Prostate gland (tissue), 2 donors: ENCODE measurements at regions of chr12 and their contacts with region 1.

Region 1: DNA sequence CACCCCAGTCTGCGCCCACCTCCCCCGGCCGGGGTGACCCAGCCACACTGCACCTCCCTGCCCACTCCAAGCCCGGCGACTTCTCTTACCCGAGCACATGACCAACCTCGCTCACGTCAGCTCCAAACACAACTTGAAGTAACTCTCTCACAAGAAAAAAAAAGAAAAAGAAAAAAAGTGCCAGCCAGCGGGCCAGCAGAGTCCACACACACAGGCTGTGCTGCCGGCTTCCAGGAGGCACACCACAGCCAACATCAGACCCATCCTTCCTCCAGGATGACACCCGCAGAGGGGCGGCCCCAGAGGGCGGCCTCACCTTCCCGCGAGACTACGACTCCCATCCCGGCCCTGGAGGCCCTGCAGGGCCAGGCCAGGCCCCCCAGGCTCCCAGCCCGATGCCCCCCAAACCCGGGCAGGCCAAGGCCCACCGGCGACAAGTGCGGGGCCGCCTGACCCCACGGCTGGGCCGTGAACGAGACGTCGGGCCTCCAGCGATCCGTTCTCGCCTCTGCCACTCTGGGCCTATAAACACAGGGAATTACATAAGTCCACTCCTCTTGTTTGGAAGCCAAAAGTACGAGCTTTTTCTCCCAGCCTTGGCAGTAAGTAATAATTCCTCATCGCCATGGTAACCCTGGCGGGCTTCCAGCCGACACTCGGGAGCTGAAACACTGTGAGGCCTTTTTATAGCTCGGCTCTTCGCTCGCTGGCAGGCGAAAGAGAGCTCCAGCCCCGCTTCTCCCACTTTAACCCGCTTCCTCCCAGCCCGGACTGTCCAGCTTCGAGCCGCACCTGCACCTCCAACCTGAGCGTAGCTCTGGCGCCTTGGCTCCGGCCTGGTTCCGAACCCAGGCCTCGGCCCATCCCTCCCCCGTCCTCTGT is 49.1 kb downstream of the NCOR2 start:
- DNase-seq: peak; percentile 99
- H3K4me3 ChIP-seq: peak overlapping the region; percentile 42 to 47
- H3K27ac ChIP-seq: peak overlapping the region; percentile 90 to 94
- H3K4me1 ChIP-seq: peaks cover 33% of the 10 kb centered on the region
- H3K27me3 ChIP-seq: no peaks in the 10 kb centered on the region
- CTCF ChIP-seq: no peak
- POLR2A ChIP-seq: no peak

Region 2: DNA sequence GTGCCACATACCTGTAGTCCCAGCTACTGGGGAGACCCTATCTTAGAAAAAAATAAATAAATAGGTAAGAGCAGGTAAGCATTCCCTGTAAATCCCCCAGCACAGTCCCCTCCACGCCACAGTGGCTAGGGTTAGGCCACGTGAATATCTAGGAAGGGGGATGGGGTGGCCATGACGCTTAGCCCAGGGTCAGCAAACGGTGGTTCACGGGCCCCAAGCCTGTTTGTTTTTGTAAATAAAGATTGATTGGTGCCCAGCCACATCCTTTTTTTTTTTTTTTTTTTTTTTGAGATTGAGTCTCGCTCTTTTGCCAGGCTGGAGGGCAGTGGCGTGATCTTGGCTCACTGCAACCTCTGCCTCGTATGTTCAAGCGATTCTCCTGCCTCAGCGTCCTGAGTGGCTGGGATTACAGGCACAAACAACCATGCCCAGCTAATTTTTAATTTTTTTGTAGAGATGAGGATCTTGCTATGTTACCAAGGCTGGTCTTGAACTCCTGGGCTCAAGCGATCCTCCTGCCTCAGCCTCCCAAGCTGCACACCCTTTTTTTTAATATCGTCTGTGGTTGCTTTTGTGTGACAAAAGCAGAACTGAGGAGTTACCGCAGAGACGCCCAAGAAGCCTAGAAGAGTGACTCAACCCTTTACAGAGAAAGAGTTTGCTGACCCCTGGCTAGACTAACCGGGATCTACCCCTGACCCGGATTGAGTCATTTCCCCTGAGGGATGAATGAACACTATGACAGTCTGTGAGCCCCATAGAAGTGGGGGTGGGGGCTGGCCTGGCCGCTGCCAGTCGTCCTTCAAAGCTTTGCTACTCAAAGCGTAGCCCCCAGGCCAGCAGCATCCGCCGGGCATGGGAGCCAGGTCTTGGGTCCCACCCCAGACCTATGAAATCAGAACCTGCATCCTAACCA is 162.8 kb after region 1 on chr12:
- intact Hi-C with region 1: no loop called
- DNase-seq: no peak
- H3K4me3 ChIP-seq: no peak overlapping the region
- H3K27ac ChIP-seq: peak overlapping the region in 1 of 2 donors; percentile 76
- H3K4me1 ChIP-seq: peaks cover 25% of the 10 kb centered on the region
- H3K27me3 ChIP-seq: no peaks in the 10 kb centered on the region
- CTCF ChIP-seq: peak in 2 of 4 experiments; percentile 19 to 31
- POLR2A ChIP-seq: no peak

Region 3: DNA sequence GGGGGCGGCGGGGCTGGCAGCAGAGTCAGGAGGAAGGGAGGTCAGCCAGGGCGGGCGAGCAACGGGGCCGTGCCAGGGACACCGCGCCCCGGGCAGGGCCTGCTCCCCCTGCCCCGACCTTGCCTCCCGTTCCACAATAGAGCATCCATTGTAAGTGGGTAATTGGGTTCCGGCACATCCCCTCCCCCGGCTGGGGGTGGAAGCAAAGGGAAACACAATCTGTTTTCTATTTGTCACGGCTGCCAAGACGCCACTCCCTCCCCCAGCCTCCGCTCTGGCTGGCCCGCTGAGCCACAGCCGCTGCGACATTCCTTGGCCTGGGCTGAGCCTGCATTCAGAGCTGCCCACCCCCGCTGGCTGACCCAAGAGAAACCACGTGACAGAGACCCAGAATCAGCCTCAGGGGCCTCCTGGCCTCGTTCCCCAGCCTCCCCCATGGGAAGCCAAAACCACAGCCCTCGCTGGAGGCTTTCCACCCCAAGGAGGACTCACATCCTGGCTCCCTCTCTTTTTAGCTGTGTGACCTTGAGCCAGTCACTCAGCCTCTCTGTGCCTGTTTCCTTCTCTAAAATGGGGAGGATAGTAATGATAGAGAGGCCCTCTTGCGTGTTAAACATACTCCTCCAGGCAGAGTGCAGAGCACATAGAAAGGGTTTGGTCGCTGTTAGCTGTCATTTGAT is 227.7 kb after region 1 on chr12:
- intact Hi-C with region 1: loop called (anchors 10 kb)
- DNase-seq: peak; percentile 92
- H3K4me3 ChIP-seq: no peak overlapping the region
- H3K27ac ChIP-seq: peak overlapping the region; percentile 78 to 88
- H3K4me1 ChIP-seq: peaks cover 12% of the 10 kb centered on the region
- H3K27me3 ChIP-seq: no peaks in the 10 kb centered on the region
- CTCF ChIP-seq: peak in 1 of 4 experiments; percentile 18
- POLR2A ChIP-seq: peak; percentile 23